IMR-90 (cell line): ENCODE measurements at regions of chr17 and their contacts with region 1.

Region 1: DNA sequence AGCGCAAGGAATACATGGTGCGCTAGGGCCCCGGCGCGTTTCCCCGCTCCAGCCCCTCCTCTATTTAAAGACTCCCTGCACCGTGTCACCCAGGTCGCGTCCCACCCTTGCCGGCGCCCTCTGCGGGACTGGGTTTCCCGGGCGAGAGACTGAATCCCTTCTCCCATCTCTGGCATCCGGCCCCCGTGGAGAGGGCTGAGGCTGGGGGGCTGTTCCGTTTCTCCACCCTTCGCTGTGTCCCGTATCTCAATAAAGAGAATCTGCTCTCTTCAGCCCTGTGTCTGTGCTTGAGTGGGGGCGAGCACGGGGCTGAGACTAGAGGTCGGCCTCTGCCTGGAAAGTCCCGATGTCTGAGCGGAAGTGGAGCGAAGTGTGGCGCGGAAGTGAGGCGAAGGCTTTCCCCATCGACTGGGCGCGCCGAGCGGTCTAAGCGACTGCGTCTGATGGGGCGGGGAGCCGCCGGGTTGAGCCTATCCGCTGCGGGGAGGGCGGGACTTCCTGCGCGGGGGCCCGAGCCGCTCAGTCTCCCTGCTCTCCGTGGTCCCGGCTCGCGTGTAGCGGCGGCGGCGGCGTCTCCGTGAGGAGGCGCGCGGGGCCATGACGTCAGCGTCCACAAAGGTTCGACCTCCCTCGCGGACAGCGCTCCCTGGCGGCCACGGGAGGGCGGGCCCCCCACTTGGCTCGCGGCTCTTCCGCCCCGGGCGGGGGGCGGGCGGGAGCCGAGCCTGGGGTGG is 2.0 kb downstream of the RNASEK start:
- DNase-seq: peak; percentile 96
- ATAC-seq: peak; percentile 90
- H3K4me3 ChIP-seq: peak overlapping the region; percentile 72
- H3K27ac ChIP-seq: peak overlapping the region; percentile 94
- H3K4me1 ChIP-seq: peaks cover 3% of the 10 kb centered on the region; the same call in 1 of the 2 replicates
- H3K27me3 ChIP-seq: no peaks in the 10 kb centered on the region
- CTCF ChIP-seq: peak; percentile 79
- POLR2A ChIP-seq: peak; percentile 80
- RAD21 ChIP-seq: no peak; the same call in 1 of the 2 replicates

Region 2: GRCh38 chr17:6753006-6753445 is 261.4 kb before region 1 on chr17:
- CTCF ChIA-PET with region 1: no interaction called
- POLR2A ChIA-PET with region 1: no interaction called
- dilution Hi-C with region 1: no loop called
- in situ Hi-C with region 1: no loop called
- intact Hi-C with region 1: loop called (anchors 2 kb)
- DNase-seq: peak; percentile 77
- ATAC-seq: peak; percentile 48
- H3K4me3 ChIP-seq: no peak overlapping the region
- H3K27ac ChIP-seq: peak overlapping the region; percentile 92
- H3K4me1 ChIP-seq: peaks cover 15% of the 10 kb centered on the region
- H3K27me3 ChIP-seq: no peaks in the 10 kb centered on the region
- CTCF ChIP-seq: no peak
- POLR2A ChIP-seq: no peak
- RAD21 ChIP-seq: no peak